ENCODE measurements at regions of chr6 and their contacts with region 1.

Region 1: DNA sequence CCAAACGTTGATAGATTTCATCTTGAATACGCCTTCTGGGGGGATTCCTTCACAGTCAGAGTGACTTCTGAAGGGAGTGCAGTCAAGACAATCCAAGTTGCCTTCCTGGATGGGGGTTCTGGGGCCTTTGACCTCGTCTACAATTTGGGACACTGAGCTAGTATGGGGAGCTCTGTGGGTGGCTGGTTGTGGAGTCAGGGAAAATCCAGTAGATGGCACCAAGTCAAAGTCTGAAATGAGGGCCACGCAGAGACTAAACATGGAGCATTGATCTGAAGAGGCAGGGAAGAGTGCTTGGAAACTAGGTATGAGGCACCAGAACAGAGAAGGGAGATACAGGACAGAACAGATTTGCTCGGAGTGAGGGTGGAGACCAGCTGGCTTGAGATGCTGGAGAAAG is 43.6 kb upstream of the CCN6 start:
- DNase-seq: no peak
- ATAC-seq: peak; percentile 39
- H3K4me3 Mint-ChIP-seq: no peak overlapping the region
- H3K27ac Mint-ChIP-seq: no peak overlapping the region
- H3K4me1 Mint-ChIP-seq: no peaks in the 10 kb centered on the region
- H3K27me3 Mint-ChIP-seq: no peaks in the 10 kb centered on the region

Region 2: GRCh38 chr6:112037783-112038216 is 27.5 kb after region 1 on chr6:
- CTCF ChIA-PET with region 1: interaction called, 29 read pairs
- DNase-seq: no peak
- ATAC-seq: no peak
- H3K4me3 Mint-ChIP-seq: no peak overlapping the region
- H3K27ac Mint-ChIP-seq: no peak overlapping the region
- H3K4me1 Mint-ChIP-seq: peaks cover 26% of the 10 kb centered on the region
- H3K27me3 Mint-ChIP-seq: no peaks in the 10 kb centered on the region

Measured in activated CD8-positive, alpha-beta memory T cell treated with anti-CD3 and anti-CD28 coated beads, Interleukin-2, amount 10 ng/mL, durations not matched to agents 7 days and 5 days (primary cell).